ENCODE measurements at regions of chr16 and their contacts with region 1.

Region 1: GRCh38 chr16:12721841-12722421 is 81.8 kb downstream of the CPPED1 start:
- DNase-seq: no peak
- H3K4me3 ChIP-seq: peak overlapping the region in 7 of 59 donors; percentile 6 to 32 (median 22)
- H3K27ac ChIP-seq: peak overlapping the region in 54 of 59 donors; percentile 1 to 81 (median 60)
- H3K27me3 ChIP-seq: no peaks in the 10 kb centered on the region
- CTCF ChIP-seq: no peak

Region 2: GRCh38 chr16:12455287-12455798 is 266.6 kb before region 1 on chr16:
- intact Hi-C with region 1: loop called in 1 of 2 experiments (anchors 5 kb)
- DNase-seq: peak; percentile 14 to 82 (median 67)
- H3K4me3 ChIP-seq: no peak overlapping the region
- H3K27ac ChIP-seq: peak overlapping the region in 1 of 59 donors; percentile 21
- H3K27me3 ChIP-seq: no peaks in the 10 kb centered on the region
- CTCF ChIP-seq: peak; percentile 50 to 95 (median 84)

Region 3: DNA sequence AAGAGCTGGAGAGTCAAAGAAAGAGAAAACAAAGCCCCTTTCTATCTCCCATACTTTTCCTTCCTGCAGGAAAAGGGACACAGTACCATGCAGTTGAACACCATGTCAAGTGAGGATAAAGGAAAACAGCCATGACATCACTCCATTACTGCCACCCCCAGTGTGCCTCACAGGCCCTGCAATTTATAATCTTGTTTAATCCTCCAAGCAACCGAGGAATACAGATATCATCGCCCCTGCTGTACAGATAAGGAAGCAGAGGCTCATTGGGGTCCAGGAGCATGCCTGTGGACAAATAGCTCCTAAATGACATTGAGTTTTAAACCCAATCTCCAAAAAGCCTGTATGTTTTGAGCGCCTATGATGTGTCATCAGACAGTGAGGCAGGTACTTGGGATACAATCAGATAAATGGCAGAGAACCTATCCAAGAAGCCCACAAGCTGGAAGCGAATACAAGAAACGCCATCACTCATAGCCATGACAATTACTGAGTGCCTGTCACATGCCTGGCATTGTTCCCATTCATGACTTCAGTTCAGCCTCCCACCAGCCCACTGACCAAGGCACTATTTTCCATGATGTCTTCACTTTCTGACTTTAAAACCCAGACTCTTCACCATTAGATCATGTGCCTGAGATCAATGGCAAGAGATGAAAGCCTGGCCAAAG is 36.2 kb after region 1 on chr16:
- intact Hi-C with region 1: loop called in 1 of 2 experiments (anchors 5 kb)
- DNase-seq: no peak
- H3K4me3 ChIP-seq: no peak overlapping the region
- H3K27ac ChIP-seq: peak overlapping the region in 58 of 59 donors; percentile 10 to 93 (median 80)
- H3K27me3 ChIP-seq: no peaks in the 10 kb centered on the region
- CTCF ChIP-seq: no peak

Region 4: GRCh38 chr16:12803203-12804097 is 81.5 kb after region 1 on chr16 and contains the start of gene CPPED1:
- intact Hi-C with region 1: loop called in 1 of 2 experiments (anchors 5 kb)
- DNase-seq: peak; percentile 74 to 94 (median 90)
- H3K4me3 ChIP-seq: peak within 1 kb of the TSS; percentile 48 to 89 (median 74)
- H3K27ac ChIP-seq: peak within 1 kb of the TSS; percentile 11 to 96 (median 88)
- H3K27me3 ChIP-seq: no peaks in the 10 kb centered on the region
- CTCF ChIP-seq: peak in 27 of 56 donors; percentile 3 to 57 (median 30)
- total RNA-seq, gene CPPED1: 8.3 to 42.3 (median 17.7) TPM

Region 5: GRCh38 chr16:12819126-12820117 is 97.5 kb after region 1 on chr16:
- intact Hi-C with region 1: loop called in 1 of 2 experiments (anchors 2 kb)
- DNase-seq: peak in 5 of 10 donors; percentile 27 to 65 (median 52)
- H3K4me3 ChIP-seq: no peak overlapping the region
- H3K27ac ChIP-seq: no peak overlapping the region
- H3K27me3 ChIP-seq: no peaks in the 10 kb centered on the region
- CTCF ChIP-seq: peak; percentile 20 to 85 (median 71)

Region 6: DNA sequence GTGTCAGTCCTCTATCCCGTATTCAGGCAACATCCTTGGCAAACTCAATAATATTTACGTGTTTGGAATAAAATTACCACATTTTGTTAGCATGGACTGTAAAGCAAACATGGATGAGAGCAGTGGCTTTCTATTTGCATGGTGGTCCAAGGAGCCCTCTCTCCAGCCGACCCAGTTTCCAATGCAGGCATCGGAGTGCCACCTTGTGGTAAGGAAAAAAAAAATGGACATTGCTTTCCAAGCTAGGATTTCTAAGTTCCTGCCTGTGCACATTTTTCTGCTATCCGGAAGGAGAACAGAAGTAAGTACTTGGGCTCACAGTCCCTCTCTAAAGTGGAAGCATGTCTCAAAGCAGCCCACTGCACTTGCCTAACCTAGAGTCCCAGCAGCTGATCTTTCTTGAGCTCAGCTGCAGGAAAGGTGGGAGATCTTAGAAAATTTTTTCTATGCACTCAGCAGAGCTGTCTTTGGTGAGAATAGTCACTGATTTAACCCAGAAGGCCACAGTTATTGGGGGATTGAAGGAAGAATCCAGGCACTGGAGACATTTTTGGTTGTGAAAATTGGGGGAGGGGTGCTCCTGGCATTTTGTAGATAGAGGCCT is 1152.0 kb after region 1 on chr16:
- intact Hi-C with region 1: no loop called
- DNase-seq: peak in 2 of 10 donors; percentile 5 to 9
- H3K4me3 ChIP-seq: no peak overlapping the region
- H3K27ac ChIP-seq: no peak overlapping the region
- H3K27me3 ChIP-seq: peaks cover 0 to 4% (median 0%) of the 10 kb centered on the region in 45 donors
- CTCF ChIP-seq: peak in 55 of 56 donors; percentile 23 to 67 (median 53)

Measured in dorsolateral prefrontal cortex (tissue), 120 donors.